ENCODE measurements at regions of chr16 and their contacts with region 1.

Region 1: DNA sequence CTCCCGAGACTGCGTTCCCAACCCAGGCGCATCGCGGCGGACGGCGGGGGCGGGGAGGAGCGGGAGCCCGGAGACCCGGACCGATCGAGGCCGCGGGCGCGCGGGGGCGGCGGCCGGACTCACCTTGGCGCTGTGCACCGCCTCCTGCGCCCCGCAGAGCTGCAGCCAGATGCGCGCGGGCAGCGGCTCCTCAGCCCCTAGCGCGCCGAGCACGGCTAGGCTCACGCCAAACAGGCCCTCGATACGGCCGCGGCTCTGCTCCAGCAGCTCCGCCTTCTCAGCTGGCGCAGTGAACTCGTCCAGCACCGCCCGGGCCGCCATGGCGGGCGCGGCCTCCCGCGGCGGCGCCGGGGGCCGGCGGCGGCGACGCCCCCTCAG is 339 bp downstream of the N4BP1 start:
- DNase-seq: no peak
- ATAC-seq: peak; percentile 65
- H3K4me3 Mint-ChIP-seq: peak overlapping the region; percentile 89
- H3K27ac Mint-ChIP-seq: peak overlapping the region; percentile 78
- H3K4me1 Mint-ChIP-seq: peaks cover 30% of the 10 kb centered on the region
- H3K27me3 Mint-ChIP-seq: no peaks in the 10 kb centered on the region
- CTCF ChIP-seq: no peak

Region 2: DNA sequence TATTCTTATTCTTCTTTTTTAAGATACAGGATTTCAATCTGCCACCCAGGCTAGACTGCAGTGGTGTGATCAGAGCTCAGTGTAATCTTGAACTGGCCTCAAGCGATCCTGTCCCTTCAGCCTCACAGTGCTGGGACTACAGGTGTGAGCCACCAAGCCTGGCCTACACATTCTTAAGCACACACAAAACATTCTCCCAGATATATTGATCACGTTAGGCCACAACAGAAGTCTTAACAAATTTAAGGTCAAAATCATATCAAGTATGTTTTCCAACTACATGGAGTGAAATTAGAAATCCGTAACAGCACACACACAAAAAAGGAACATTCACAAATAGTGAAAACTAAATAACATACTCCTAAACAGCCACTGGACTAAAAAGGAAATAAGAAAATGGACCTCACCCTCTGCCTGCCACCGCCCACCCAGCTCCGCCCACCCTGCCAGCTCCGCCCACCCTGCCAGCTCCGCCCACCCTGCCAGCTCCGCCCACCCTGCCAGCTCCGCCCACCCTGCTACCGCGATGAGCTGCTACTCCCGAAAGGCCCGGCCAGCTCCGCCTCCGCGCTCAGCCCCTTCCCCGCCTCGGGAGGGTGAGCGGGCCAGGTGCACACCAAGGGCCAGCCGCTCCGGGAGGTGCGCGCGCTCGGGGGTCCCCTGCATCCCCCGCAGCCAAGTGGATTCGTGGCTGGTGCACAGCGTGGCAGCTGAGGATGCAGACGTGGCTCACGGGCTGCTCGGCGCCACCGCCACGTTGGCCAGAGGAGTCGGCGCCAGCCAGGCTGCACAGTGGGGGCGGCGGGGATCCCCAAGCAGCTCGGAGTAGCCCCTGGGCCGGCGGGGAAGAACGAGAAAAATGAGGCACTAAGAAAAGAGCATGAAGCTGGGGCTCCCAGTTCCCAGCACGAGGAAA is 1819.9 kb before region 1 on chr16:
- CTCF ChIA-PET with region 1: no interaction called
- POLR2A ChIA-PET with region 1: no interaction called
- intact Hi-C with region 1: loop called (anchors 10 kb)
- DNase-seq: peak; percentile 77
- ATAC-seq: peak; percentile 93
- H3K4me3 Mint-ChIP-seq: peak overlapping the region; percentile 84
- H3K27ac Mint-ChIP-seq: peak overlapping the region; percentile 86
- H3K4me1 Mint-ChIP-seq: peaks cover 57% of the 10 kb centered on the region
- H3K27me3 Mint-ChIP-seq: no peaks in the 10 kb centered on the region
- CTCF ChIP-seq: no peak

Region 3: GRCh38 chr16:48353565-48354163 is 256.0 kb before region 1 on chr16:
- CTCF ChIA-PET with region 1: no interaction called
- POLR2A ChIA-PET with region 1: interaction called, 3 read pairs
- intact Hi-C with region 1: loop called (anchors 1 kb)
- DNase-seq: no peak
- ATAC-seq: peak; percentile 93
- H3K4me3 Mint-ChIP-seq: no peak overlapping the region
- H3K27ac Mint-ChIP-seq: peak overlapping the region; percentile 5
- H3K4me1 Mint-ChIP-seq: peaks cover 28% of the 10 kb centered on the region
- H3K27me3 Mint-ChIP-seq: no peaks in the 10 kb centered on the region
- CTCF ChIP-seq: peak; percentile 53

Region 4: GRCh38 chr16:48385272-48386150 is 224.1 kb before region 1 on chr16 and contains the start of gene SIAH1:
- CTCF ChIA-PET with region 1: no interaction called
- POLR2A ChIA-PET with region 1: interaction called, 4 read pairs
- intact Hi-C with region 1: loop called (anchors 1 kb)
- DNase-seq: peak; percentile 97
- ATAC-seq: peak; percentile 80
- H3K4me3 Mint-ChIP-seq: peak within 1 kb of the TSS; percentile 93
- H3K27ac Mint-ChIP-seq: peak within 1 kb of the TSS; percentile 90
- H3K4me1 Mint-ChIP-seq: peaks cover 33% of the 10 kb centered on the region
- H3K27me3 Mint-ChIP-seq: no peaks in the 10 kb centered on the region
- CTCF ChIP-seq: no peak
- total RNA-seq, gene SIAH1: 26.9 and 31.5 TPM in 2 replicates

Region 5: DNA sequence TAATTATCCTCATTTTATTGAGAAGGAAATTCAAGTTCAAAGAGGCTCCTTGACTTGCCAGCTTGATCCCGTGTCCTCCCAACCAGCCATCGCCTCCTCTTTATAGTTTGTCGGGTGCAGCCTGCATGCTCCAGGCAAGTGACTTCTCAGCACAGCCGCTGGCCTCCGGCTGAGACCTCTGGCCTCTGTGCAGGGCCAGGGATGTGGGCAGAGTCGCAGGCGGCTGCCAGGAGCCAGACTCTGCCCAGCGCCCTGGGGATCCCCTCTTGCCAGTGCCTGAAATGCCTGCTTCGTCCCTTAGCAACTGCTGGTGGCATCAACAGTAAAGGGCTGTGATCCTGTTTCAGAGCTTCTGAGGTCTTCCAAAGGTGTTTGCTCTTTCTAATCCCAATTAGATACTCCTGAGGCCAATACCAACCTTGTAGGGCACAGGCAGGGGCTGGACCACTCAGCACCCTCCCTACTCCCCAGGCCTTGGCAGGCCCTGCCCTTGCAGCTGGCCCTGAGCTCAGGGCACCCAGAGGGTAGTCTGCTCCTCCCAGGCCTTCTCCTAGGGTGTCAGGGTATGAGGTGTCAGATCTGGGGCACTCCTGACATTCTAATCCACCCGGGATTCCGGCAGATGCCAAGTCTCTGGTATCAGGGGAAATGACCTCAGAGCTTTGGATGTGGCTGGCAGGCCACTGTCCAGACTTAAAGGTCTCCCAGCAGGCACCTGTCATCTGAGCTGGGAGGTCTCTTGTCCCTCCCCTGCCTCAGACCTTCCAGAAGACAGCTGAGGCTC is 156.5 kb before region 1 on chr16:
- CTCF ChIA-PET with region 1: no interaction called
- POLR2A ChIA-PET with region 1: no interaction called
- intact Hi-C with region 1: loop called (anchors 1 kb)
- DNase-seq: no peak
- ATAC-seq: no peak
- H3K4me3 Mint-ChIP-seq: no peak overlapping the region
- H3K27ac Mint-ChIP-seq: no peak overlapping the region
- H3K4me1 Mint-ChIP-seq: peaks cover 30% of the 10 kb centered on the region
- H3K27me3 Mint-ChIP-seq: no peaks in the 10 kb centered on the region
- CTCF ChIP-seq: no peak

Region 6: DNA sequence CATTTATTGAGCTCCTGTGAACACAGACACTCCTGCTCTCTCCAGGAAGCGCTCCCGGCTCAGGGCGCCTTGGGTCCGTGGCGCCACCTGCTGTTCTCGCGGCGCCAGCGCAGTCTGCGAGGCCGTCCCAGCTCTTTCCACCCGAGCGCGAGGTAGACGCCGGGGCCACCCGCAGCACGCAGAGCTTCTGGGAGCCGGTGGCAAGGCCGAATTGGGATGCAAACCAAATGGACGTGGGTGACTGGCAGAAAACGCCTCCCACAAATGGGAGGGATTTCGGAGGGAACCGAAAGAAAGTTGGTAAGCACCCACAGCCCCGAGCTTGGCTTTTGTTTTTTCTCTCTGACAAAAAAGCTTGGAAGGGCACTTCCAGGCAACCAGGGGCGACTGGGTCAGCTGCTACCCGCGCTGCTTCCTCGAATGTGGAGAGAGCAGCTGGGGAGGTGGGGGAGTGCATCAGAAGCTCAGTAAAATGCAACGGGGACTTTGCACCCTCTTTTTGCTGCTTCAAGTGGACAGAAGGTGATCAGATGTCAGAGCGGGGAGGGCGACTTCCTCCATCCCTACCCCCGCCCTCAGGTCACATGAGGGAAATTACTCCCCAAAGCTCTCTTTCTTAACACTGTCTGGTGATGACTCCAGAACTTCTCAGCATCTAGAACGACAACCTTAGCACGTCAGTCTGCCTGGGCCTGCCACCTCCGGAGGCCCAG is 13.8 kb after region 1 on chr16:
- CTCF ChIA-PET with region 1: interaction called, 15 read pairs
- POLR2A ChIA-PET with region 1: interaction called, 7 read pairs
- intact Hi-C with region 1: loop called (anchors 1 kb)
- DNase-seq: peak; percentile 78
- ATAC-seq: peak; percentile 98
- H3K4me3 Mint-ChIP-seq: peak overlapping the region; percentile 82
- H3K27ac Mint-ChIP-seq: no peak overlapping the region
- H3K4me1 Mint-ChIP-seq: peaks cover 24% of the 10 kb centered on the region
- H3K27me3 Mint-ChIP-seq: peaks cover 3% of the 10 kb centered on the region
- CTCF ChIP-seq: peak; percentile 97

Region 7: DNA sequence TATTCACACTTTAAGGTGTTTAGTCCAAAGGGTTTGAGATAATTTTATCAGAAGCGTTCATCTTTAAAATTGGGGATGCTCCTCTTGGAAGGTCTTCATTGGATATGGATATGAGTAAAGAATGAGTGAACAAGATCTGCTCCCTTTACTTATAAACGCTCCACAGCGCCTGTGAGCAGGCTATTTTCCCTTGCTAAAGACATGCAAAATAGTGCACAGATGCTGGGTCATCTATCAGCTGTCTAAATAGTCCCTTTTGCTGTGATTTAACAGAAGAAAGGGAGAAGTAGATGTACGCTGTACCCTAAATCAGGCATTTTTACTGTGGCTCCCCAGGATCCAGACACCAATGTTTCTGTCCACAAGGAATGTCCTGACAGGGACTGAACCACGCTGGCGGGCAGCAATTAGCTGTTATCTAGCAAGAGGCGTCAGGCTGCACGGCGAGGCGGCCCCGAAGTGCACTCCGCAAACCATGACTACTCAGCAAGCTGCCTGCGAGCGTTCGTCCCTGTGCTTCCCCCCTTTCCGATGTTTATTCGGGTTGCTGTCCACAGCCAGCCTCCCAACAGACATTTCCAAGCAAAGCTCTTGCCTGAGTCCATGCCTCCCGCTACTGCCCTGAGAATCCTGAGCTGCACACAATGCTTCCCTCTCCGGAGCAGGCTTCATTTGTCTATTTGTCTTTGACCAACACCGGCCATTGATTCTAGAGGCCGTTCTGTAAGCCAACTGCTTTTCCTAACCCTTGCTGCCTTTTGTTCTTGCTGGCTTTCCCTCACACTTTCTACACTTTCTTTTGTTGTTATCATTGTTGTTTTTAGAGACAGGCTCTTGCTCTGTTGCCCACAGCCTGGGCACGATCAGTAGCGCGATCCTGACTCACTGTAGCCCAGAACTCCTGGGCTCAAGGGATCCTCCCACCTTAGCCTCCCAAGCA is 1359.7 kb after region 1 on chr16:
- CTCF ChIA-PET with region 1: no interaction called
- POLR2A ChIA-PET with region 1: no interaction called
- intact Hi-C with region 1: no loop called
- DNase-seq: no peak
- ATAC-seq: no peak
- H3K4me3 Mint-ChIP-seq: no peak overlapping the region
- H3K27ac Mint-ChIP-seq: no peak overlapping the region
- H3K4me1 Mint-ChIP-seq: no peaks in the 10 kb centered on the region
- H3K27me3 Mint-ChIP-seq: peaks cover 31% of the 10 kb centered on the region
- CTCF ChIP-seq: no peak